ENCODE measurements at regions of chr11 and their contacts with region 1.

Region 1: DNA sequence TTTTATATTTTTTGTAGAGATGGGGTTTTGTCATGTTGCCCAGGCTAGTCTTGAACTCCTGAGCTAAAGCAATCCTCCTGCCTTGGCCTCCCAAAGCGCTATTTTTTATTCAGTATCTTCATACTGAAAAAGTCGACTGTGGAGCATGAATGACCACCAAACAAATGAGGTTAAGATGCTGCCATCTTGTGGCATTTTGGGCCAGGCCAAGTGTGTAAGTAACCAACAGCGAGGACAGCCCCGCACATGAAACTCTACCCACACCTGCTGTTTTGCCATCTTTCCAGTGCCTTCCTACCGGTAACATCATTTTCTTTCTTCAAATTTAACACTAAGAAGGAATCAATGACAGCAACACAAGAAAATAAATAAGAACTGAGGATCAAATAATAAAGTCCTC is 32.2 kb upstream of the AQP11 start:
- DNase-seq: no peak
- H3K4me3 ChIP-seq: no peak overlapping the region
- H3K27ac ChIP-seq: no peak overlapping the region
- H3K4me1 ChIP-seq: peaks cover 20% of the 10 kb centered on the region
- H3K27me3 ChIP-seq: no peaks in the 10 kb centered on the region
- CTCF ChIP-seq: peak; percentile 16 to 18

Region 2: GRCh38 chr11:77198440-77198849 is 359.1 kb before region 1 on chr11:
- CTCF ChIA-PET with region 1: no interaction called
- dilution Hi-C with region 1: loop called (anchors 10 kb)
- in situ Hi-C with region 1: no loop called
- intact Hi-C with region 1: no loop called
- DNase-seq: no peak
- H3K4me3 ChIP-seq: no peak overlapping the region
- H3K27ac ChIP-seq: no peak overlapping the region
- H3K4me1 ChIP-seq: no peaks in the 10 kb centered on the region
- H3K27me3 ChIP-seq: no peaks in the 10 kb centered on the region
- CTCF ChIP-seq: peak; percentile 43

Region 3: DNA sequence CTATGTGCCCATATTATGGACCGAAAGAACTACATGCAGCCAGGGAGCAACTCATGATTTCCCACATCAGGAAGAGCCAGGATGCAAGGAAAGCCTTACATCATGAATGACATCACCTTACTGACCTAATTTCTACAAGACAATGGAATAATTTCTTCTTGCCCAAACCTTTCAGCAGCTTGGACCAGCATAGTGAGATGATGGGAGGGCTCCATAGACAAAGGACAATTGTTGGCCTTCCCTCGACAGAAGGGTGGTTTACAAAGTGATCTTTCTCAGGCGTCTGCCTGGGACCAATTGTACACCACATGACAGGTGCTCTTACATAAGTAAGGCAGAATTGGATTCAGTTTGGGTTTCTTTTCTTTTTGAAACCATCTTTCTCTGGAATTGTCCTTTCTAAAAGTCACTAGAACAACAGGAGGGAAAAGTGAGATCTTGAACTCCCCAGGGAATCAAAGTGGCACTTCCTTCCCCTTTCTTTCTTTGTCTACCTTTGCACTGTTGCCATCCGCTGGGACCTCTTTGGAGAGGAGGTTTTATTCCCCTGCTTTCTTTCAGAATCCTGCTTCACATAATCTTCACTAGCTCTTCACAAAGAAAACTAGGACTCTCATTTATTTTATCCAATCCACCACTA is 32.0 kb before region 1 on chr11:
- CTCF ChIA-PET with region 1: no interaction called
- dilution Hi-C with region 1: no loop called
- in situ Hi-C with region 1: no loop called
- intact Hi-C with region 1: no loop called
- DNase-seq: no peak
- H3K4me3 ChIP-seq: no peak overlapping the region
- H3K27ac ChIP-seq: no peak overlapping the region
- H3K4me1 ChIP-seq: no peaks in the 10 kb centered on the region
- H3K27me3 ChIP-seq: no peaks in the 10 kb centered on the region
- CTCF ChIP-seq: no peak

Region 4: DNA sequence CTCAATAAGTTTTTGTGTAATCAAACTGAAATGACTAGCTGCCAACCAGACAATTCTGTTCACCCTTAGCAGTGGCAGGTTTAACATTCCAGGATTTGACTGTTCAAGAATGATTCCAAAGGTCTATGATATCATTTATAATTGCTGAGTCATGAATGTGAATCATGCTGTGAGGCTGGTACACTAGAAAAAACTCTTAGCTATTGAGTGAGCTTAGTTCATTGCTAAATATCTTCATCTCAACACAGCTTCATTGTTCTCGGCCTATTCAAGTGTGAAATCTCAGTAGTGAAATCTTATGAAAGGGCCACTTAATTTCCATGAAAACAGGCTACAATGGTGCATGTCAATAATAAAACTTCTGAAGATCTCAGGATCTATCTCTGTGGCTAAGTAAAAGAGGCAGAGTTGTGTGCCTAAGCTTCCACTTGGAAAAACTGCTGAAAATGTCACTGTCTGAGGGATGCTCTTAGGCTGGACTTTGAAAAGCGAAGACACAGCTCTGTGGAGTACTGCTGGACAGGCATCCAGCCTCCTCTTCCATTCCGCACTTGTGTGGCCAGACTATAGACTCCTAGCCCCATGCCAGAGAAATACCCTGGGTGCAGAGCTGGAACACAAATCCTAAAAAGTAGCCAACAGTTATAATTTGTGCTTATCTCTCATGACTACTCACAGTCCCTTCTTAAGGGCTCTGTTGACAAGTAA is 45.0 kb after region 1 on chr11:
- CTCF ChIA-PET with region 1: no interaction called
- dilution Hi-C with region 1: no loop called
- in situ Hi-C with region 1: no loop called
- intact Hi-C with region 1: loop called (anchors 5 kb)
- DNase-seq: peak; percentile 89
- H3K4me3 ChIP-seq: no peak overlapping the region
- H3K27ac ChIP-seq: peak overlapping the region; percentile 55
- H3K4me1 ChIP-seq: peaks cover 19% of the 10 kb centered on the region
- H3K27me3 ChIP-seq: no peaks in the 10 kb centered on the region
- CTCF ChIP-seq: no peak